ENCODE measurements at regions of chrX and their contacts with region 1.

Region 1: DNA sequence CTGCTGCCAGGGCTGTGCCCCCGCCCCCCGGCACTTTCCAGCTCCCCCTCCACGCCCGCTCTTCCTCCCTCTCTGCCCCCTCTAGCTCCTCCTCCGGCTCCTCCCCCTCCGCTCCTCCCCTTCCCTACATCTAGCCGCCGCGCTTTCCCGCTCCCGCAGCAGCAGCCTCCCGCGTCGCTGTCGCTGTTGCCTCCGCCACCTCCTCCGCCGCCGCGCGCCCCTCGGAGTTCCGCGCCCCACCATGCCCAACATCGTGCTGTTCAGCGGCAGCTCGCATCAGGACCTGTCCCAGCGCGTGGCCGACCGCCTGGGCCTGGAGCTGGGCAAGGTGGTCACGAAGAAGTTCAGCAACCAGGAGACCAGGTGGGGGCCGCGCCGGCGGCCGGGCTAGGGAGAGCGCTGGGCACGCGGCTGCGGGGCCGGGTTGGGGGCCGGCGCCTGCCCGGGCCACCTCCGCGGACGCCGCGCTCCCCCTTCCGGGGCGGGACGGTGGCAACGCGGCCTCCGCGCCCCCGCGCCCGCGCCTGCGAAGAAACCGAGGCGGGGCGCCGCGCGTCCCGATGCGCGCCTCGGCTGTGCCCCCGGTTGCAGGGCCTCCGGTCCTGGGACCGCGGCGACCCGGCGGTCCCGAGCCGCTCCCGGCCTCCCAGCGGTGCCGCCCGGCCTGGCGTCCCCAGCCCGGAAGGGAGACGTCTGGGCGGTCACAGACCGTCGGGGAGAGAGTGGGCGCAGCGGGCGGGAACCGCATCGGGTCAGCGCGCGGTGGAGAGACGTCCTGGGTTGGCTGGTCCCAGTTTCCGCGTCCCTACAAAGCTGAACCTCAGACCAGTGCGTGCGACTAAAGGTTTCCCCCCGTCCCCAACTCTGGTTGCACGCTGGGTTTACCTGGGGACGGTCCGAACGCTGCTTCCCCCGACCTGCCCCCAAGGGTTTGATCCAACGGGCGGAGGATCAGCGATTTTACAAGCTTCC is at the start of gene PRPS2:
- DNase-seq: peak; percentile 72
- H3K4me3 Mint-ChIP-seq: peak within 1 kb of the TSS; percentile 82
- H3K27ac Mint-ChIP-seq: peak within 1 kb of the TSS; percentile 74
- H3K4me1 Mint-ChIP-seq: peaks cover 31% of the 10 kb centered on the region
- H3K27me3 Mint-ChIP-seq: peaks cover 8% of the 10 kb centered on the region
- total RNA-seq, gene PRPS2: 64.6 to 66.9 TPM

Region 2: GRCh38 chrX:12751887-12752286 is 39.7 kb before region 1 on chrX:
- CTCF ChIA-PET with region 1: no interaction called
- POLR2A ChIA-PET with region 1: no interaction called
- DNase-seq: no peak
- H3K4me3 Mint-ChIP-seq: no peak overlapping the region
- H3K27ac Mint-ChIP-seq: no peak overlapping the region
- H3K4me1 Mint-ChIP-seq: no peaks in the 10 kb centered on the region
- H3K27me3 Mint-ChIP-seq: peaks cover under 1% of the 10 kb centered on the region

Region 3: DNA sequence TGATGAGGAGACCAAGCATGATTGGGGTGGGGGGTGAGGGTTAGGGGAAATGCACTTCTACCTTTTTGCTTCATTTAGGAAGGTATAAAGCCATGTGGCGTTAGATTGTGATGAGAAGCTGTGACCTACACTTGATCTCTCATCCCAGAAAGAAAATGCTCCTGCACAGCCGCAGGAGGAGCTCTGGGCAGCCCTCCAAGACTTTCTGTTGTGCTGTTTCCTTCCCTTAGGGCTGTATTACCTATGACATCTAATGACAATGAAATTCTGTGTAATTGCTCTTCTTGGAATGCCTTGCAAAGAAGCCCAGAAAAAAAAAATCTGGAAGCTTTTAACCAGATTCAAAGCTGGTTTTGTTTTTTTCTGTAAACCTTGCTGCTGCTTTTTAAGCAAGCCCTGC is 13.1 kb after region 1 on chrX:
- CTCF ChIA-PET with region 1: no interaction called
- POLR2A ChIA-PET with region 1: interaction called, 21 read pairs
- DNase-seq: no peak
- H3K4me3 Mint-ChIP-seq: no peak overlapping the region
- H3K27ac Mint-ChIP-seq: no peak overlapping the region
- H3K4me1 Mint-ChIP-seq: peaks cover 11% of the 10 kb centered on the region
- H3K27me3 Mint-ChIP-seq: no peaks in the 10 kb centered on the region

Measured in activated CD4-positive, alpha-beta memory T cell treated with anti-CD3 and anti-CD28 coated beads, Interleukin-2, amount 10 ng/mL, durations not matched to agents 7 days and 5 days (primary cell).